Activated naive CD4-positive, alpha-beta T cell treated with anti-CD3 and anti-CD28 coated beads for 36 hours (primary cell): ENCODE measurements at regions of chrX and their contacts with region 1.

Region 1: DNA sequence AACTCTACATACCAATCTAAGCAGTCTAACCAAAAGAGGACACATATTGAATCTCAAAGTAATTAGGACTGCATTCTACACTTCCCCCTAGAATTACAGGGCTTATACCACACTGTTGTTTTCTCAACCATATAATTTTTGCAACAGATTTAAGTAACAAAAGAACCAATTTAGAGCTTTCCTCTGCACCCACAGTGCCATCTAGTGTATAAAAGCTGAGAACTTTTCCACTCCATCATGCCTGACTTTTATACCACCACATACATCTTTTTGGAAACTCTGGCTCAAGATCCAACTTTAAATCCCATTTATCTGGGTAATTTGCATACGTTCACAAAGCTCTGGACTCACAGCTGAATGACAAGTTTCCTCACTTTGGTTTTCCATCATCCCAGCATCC is 99.5 kb downstream of the EFHC2 start:
- DNase-seq: no peak
- H3K4me3 Mint-ChIP-seq: no peak overlapping the region
- H3K27ac Mint-ChIP-seq: no peak overlapping the region
- H3K4me1 Mint-ChIP-seq: peaks cover 17% of the 10 kb centered on the region
- H3K27me3 Mint-ChIP-seq: no peaks in the 10 kb centered on the region

Region 2: DNA sequence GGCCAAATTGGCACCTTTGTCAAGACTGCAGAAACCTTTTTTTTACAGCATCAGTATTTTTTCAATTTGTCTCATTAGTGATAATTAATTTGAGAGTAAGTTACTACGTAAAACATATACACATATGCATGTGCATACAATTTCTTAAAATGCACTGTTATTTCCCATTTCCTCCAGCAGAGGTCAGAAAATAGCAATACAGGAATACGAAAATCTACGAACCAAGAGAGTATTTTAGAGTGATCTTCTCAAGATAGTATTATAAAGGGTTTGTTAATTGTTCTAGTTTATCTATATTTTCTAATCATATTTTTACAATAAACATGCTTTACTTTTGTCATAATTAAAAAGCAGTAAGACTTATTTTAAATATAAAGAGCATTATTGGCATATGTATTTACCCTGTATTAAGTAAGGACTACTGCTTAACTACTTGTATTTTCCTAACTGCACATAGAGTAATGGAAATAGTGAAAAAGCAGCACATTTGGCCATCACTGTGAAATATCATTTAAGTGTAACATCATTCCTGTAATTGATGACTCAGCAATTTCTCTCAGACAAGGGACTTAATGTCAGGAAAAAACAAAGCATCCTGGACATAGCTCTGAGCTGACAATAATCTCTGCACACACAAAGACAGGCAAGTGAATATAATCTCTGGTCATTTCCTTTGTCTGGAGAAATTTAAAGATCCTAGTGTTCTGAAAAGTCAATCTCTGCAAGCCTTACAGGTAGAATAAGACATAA is 407.4 kb before region 1 on chrX:
- CTCF ChIA-PET with region 1: no interaction called
- intact Hi-C with region 1: loop called (anchors 1 kb)
- DNase-seq: no peak
- H3K4me3 Mint-ChIP-seq: no peak overlapping the region
- H3K27ac Mint-ChIP-seq: no peak overlapping the region
- H3K4me1 Mint-ChIP-seq: no peaks in the 10 kb centered on the region
- H3K27me3 Mint-ChIP-seq: no peaks in the 10 kb centered on the region

Region 3: DNA sequence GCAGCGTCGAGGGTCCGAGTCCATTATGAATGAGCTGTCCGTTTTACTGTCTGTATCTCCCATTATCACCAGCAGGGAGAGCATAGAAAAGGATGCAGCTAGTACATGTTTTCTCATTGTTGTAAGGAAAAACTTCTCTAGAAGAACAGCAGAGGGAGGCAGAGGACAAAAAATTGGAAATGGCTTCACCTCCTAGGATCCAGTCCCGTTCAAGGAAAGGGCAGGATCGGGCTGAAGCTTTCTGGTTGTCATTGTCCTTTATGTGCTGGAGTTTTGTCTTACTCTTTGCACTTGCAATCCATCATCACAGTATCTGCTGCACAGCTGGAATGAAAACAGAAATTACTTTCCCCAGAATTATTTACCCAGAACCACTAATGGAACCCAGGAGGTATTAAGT is 285.5 kb before region 1 on chrX:
- CTCF ChIA-PET with region 1: interaction called, 26 read pairs
- intact Hi-C with region 1: loop called (anchors 1 kb)
- DNase-seq: peak; percentile 12
- H3K4me3 Mint-ChIP-seq: no peak overlapping the region
- H3K27ac Mint-ChIP-seq: no peak overlapping the region
- H3K4me1 Mint-ChIP-seq: peaks cover 4% of the 10 kb centered on the region
- H3K27me3 Mint-ChIP-seq: no peaks in the 10 kb centered on the region

Region 4: DNA sequence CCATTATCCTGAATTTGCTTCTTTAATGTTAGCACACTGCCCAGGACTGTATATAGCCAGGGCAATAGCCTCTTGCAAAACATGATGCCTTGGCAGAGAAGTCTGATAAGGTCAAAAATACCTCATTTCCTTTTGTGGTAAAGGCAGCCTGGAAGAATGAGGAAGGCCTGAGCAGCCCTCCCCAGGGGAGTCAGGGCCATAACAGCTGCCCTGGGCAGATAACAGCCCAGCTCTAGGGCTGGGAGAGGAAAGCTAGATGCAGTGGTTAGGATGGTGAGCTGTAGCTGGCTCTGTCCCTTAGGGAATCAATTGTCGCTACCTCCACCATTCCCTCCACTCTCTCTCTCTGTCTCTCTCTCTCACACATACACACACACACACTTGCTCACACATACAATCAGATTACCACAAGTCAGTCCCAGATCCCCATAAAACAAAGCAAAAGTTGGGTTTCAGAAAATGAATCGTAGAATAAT is 70.3 kb after region 1 on chrX:
- CTCF ChIA-PET with region 1: no interaction called
- intact Hi-C with region 1: loop called (anchors 5 kb)
- DNase-seq: peak; percentile 9
- H3K4me3 Mint-ChIP-seq: no peak overlapping the region
- H3K27ac Mint-ChIP-seq: peak overlapping the region; percentile 51
- H3K4me1 Mint-ChIP-seq: peaks cover 26% of the 10 kb centered on the region
- H3K27me3 Mint-ChIP-seq: no peaks in the 10 kb centered on the region

Region 5: DNA sequence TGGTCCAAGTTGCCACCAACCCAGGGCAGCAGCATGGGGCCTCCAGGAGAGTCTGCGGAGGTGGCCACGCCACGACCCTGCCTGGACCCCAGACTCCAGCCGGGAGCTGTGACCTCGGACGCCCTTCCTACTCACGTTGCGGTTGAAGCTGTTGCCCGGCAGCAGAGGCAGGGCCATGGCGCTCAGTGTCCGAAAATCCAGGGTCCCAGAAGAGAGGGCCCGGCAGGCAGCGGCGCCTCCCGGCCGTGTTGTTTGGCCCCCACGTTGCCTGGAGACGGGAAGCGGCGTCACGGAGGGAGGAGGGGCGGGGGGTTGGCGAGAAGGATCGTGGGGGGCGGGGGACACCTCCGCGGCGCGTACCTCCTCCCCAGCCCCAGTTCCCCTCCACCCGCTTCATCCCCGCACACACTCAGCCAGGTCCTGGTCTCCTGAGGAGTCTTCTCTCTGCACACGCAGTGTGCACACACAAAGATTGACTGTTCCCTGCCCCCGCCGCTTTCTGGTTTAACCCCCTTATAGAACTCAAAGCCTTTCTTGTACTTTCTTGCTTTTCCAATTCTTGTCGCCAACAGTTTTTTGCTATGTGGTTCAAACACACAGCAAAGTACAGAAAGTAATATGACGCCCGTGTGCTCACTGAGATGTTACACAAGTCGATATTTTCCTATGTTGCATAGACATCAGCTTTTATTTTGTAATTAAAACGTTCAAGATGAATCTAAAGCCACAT is 99.6 kb after region 1 on chrX and contains the start of gene EFHC2:
- CTCF ChIA-PET with region 1: no interaction called
- intact Hi-C with region 1: loop called (anchors 5 kb)
- DNase-seq: peak; percentile 48
- H3K4me3 Mint-ChIP-seq: peak within 1 kb of the TSS; percentile 77
- H3K27ac Mint-ChIP-seq: peak within 1 kb of the TSS; percentile 80
- H3K4me1 Mint-ChIP-seq: peaks cover 13% of the 10 kb centered on the region
- H3K27me3 Mint-ChIP-seq: no peaks in the 10 kb centered on the region
- total RNA-seq, gene EFHC2: 0.77 to 0.79 TPM

Region 6: GRCh38 chrX:44542567-44543325 is 298.7 kb after region 1 on chrX and contains the start of gene FUNDC1:
- CTCF ChIA-PET with region 1: no interaction called
- intact Hi-C with region 1: loop called (anchors 2 kb)
- DNase-seq: peak; percentile 94
- H3K4me3 Mint-ChIP-seq: peak within 1 kb of the TSS; percentile 84
- H3K27ac Mint-ChIP-seq: peak within 1 kb of the TSS; percentile 84
- H3K4me1 Mint-ChIP-seq: peaks cover 15% of the 10 kb centered on the region
- H3K27me3 Mint-ChIP-seq: no peaks in the 10 kb centered on the region
- total RNA-seq, gene FUNDC1: 11.9 to 12.8 TPM